ENCODE measurements at regions of chr1 and their contacts with region 1.

Region 1: GRCh38 chr1:236476019-236476418 is 47.8 kb upstream of the LGALS8 start:
- DNase-seq: no peak
- H3K4me3 ChIP-seq: no peak overlapping the region
- H3K27ac ChIP-seq: no peak overlapping the region
- H3K4me1 ChIP-seq: no peaks in the 10 kb centered on the region
- H3K27me3 ChIP-seq: no peaks in the 10 kb centered on the region
- CTCF ChIP-seq: no peak

Region 2: DNA sequence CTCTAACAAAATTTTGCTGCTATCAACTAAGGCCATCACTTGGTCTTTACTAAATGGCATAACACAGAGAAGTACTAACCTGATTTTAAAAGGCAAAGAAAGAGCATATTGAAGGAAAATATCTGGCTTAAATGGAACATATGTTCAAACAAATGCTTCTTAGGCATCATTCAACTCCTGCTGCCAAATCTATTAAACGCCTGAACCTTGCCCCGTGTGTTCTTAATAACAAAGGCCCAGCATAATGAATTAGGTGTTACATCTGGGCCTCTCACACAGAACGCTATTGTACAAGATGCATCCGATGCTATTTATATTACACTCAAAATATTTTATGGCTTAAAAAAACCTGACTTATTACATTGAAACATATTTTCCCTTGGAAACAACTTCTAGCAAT is 1020.2 kb before region 1 on chr1:
- CTCF ChIA-PET with region 1: no interaction called
- dilution Hi-C with region 1: no loop called
- in situ Hi-C with region 1: no loop called
- intact Hi-C with region 1: no loop called
- DNase-seq: no peak
- H3K4me3 ChIP-seq: no peak overlapping the region
- H3K27ac ChIP-seq: no peak overlapping the region
- H3K4me1 ChIP-seq: no peaks in the 10 kb centered on the region
- H3K27me3 ChIP-seq: no peaks in the 10 kb centered on the region
- CTCF ChIP-seq: no peak

Region 3: GRCh38 chr1:236142253-236143103 is 333.5 kb before region 1 on chr1 and contains the start of gene GPR137B:
- CTCF ChIA-PET with region 1: no interaction called
- dilution Hi-C with region 1: loop called (anchors 5 kb)
- in situ Hi-C with region 1: no loop called
- intact Hi-C with region 1: no loop called
- DNase-seq: peak; percentile 43
- H3K4me3 ChIP-seq: peak within 1 kb of the TSS; percentile 85 to 98 (median 88)
- H3K27ac ChIP-seq: peak within 1 kb of the TSS; percentile 45
- H3K4me1 ChIP-seq: peaks cover 22% of the 10 kb centered on the region
- H3K27me3 ChIP-seq: no peaks in the 10 kb centered on the region
- CTCF ChIP-seq: no peak
- total RNA-seq, gene GPR137B: 10.2 to 24.7 TPM

Region 4: GRCh38 chr1:236228411-236228810 is 247.6 kb before region 1 on chr1:
- CTCF ChIA-PET with region 1: no interaction called
- dilution Hi-C with region 1: no loop called
- in situ Hi-C with region 1: no loop called
- intact Hi-C with region 1: no loop called
- DNase-seq: no peak
- H3K4me3 ChIP-seq: no peak overlapping the region
- H3K27ac ChIP-seq: no peak overlapping the region
- H3K4me1 ChIP-seq: no peaks in the 10 kb centered on the region
- H3K27me3 ChIP-seq: no peaks in the 10 kb centered on the region
- CTCF ChIP-seq: no peak